ENCODE measurements at regions of chr9 and their contacts with region 1.

Region 1: DNA sequence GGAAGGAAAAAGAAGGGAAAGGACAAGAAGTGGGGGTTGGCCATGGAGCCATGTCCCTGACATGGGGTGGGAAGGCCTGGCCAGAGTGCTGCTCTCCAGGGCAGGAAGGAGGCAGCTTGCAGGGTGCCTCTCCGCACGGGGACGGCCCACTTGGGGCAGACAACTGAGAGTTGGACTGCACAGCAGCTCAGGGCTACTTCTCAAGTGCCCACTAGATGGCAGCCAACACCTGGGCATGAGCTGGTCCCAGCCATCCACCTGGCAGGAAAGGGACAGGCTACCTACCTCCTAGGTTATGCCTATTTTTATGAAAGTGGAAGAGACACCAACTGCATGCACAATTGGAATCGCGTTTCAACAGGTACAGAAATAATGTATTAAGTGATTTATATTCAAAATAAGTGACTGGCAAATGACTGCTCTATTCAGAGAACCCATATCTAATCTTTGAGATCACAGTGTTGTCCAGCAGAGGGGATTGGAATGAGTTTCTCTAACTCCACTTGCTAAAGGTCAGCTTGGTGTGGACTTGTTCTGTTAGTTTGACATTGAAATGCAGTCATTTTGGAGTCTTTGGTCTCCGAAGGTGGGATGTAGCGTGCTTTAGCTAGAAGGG is 113.4 kb downstream of the SYK start:
- DNase-seq: peak; percentile 45 to 85 (median 74)
- ATAC-seq: peak; percentile 90
- H3K4me3 ChIP-seq: no peak overlapping the region
- H3K4me3 Mint-ChIP-seq: no peak overlapping the region
- H3K27ac ChIP-seq: no peak overlapping the region
- H3K27ac Mint-ChIP-seq: no peak overlapping the region
- H3K4me1 ChIP-seq: no peaks in the 10 kb centered on the region
- H3K4me1 Mint-ChIP-seq: no peaks in the 10 kb centered on the region
- H3K27me3 ChIP-seq: no peaks in the 10 kb centered on the region
- H3K27me3 Mint-ChIP-seq: no peaks in the 10 kb centered on the region
- CTCF ChIP-seq: peak; percentile 86

Region 2: GRCh38 chr9:91253488-91253887 is 338.5 kb after region 1 on chr9:
- CTCF ChIA-PET with region 1: no interaction called
- POLR2A ChIA-PET with region 1: no interaction called
- intact Hi-C with region 1: loop called in 1 of 2 experiments (anchors 10 kb)
- DNase-seq: peak in 4 of 9 experiments; percentile 7 to 78 (median 41)
- ATAC-seq: peak; percentile 80
- H3K4me3 ChIP-seq: no peak overlapping the region
- H3K4me3 Mint-ChIP-seq: no peak overlapping the region
- H3K27ac ChIP-seq: no peak overlapping the region
- H3K27ac Mint-ChIP-seq: no peak overlapping the region
- H3K4me1 ChIP-seq: no peaks in the 10 kb centered on the region
- H3K4me1 Mint-ChIP-seq: peaks cover 19% of the 10 kb centered on the region
- H3K27me3 ChIP-seq: no peaks in the 10 kb centered on the region
- H3K27me3 Mint-ChIP-seq: no peaks in the 10 kb centered on the region
- CTCF ChIP-seq: no peak

Region 3: DNA sequence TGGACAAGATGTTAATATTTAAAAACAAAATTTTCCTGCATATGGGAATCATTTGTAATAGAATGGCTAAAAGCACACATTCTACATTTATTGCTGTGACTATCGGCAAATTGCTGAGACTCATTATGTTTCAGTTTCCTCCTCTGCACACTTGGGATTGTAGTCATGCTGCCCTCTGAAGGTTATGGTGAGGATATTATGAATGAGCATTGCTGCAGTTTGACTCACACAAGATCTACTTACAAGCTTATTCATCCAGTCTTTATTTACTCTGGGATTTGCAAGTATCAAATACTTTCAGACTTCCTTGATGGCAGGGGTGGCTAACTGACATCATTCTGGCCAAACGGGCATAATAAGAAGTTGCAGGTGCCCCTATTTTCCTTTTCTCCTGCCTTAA is 518.2 kb after region 1 on chr9:
- CTCF ChIA-PET with region 1: interaction called, 85 read pairs
- POLR2A ChIA-PET with region 1: no interaction called
- intact Hi-C with region 1: no loop called
- DNase-seq: peak in 2 of 9 experiments; percentile 54 to 64
- ATAC-seq: peak; percentile 36
- H3K4me3 ChIP-seq: no peak overlapping the region
- H3K4me3 Mint-ChIP-seq: no peak overlapping the region
- H3K27ac ChIP-seq: no peak overlapping the region
- H3K27ac Mint-ChIP-seq: no peak overlapping the region
- H3K4me1 ChIP-seq: no peaks in the 10 kb centered on the region
- H3K4me1 Mint-ChIP-seq: peaks cover 2% of the 10 kb centered on the region
- H3K27me3 ChIP-seq: no peaks in the 10 kb centered on the region
- H3K27me3 Mint-ChIP-seq: peaks cover 2% of the 10 kb centered on the region
- CTCF ChIP-seq: peak; percentile 25

Region 4: GRCh38 chr9:91681461-91682305 is 766.7 kb after region 1 on chr9:
- CTCF ChIA-PET with region 1: interaction called, 15 read pairs
- POLR2A ChIA-PET with region 1: no interaction called
- intact Hi-C with region 1: loop called (anchors 1 kb)
- DNase-seq: peak; percentile 44 to 74 (median 59)
- ATAC-seq: peak; percentile 80
- H3K4me3 ChIP-seq: no peak overlapping the region
- H3K4me3 Mint-ChIP-seq: peak overlapping the region; percentile 26
- H3K27ac ChIP-seq: no peak overlapping the region
- H3K27ac Mint-ChIP-seq: no peak overlapping the region
- H3K4me1 ChIP-seq: peaks cover 5% of the 10 kb centered on the region
- H3K4me1 Mint-ChIP-seq: peaks cover 1% of the 10 kb centered on the region
- H3K27me3 ChIP-seq: peaks cover 3 to 4% of the 10 kb centered on the region in 2 experiments
- H3K27me3 Mint-ChIP-seq: peaks cover 42% of the 10 kb centered on the region
- CTCF ChIP-seq: peak; percentile 81

Region 5: DNA sequence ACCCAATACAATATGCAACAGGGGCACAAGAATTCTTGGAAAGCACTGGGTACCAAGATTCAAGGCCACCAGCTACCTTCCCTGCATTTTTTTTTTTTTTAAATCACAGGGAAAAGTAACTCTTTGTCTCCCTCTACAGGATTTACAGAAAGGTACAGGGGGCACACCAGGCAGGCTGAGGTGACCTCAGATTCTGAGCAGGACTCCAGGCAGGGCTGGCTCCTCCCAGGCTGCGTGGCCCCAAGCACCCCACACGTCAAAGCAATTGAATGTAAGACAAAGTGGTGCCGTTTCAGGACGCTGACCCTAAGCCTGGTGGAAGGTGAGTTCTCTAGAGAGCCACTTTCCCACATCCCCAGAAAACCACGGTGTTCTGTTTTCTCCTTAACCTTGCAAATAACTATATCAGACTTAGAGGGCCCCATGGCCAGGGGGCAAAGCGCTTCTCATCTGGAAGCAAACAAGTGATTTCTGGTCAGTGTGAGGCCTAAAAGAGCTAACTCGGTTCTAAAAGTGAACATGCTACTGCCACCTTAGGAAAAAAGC is 812.4 kb after region 1 on chr9:
- CTCF ChIA-PET with region 1: interaction called, 29 read pairs
- POLR2A ChIA-PET with region 1: no interaction called
- intact Hi-C with region 1: loop called in 1 of 2 experiments (anchors 1 kb)
- DNase-seq: peak in 3 of 9 experiments; percentile 17 to 57 (median 52)
- ATAC-seq: peak; percentile 55
- H3K4me3 ChIP-seq: no peak overlapping the region
- H3K4me3 Mint-ChIP-seq: no peak overlapping the region
- H3K27ac ChIP-seq: no peak overlapping the region
- H3K27ac Mint-ChIP-seq: no peak overlapping the region
- H3K4me1 ChIP-seq: no peaks in the 10 kb centered on the region
- H3K4me1 Mint-ChIP-seq: no peaks in the 10 kb centered on the region
- H3K27me3 ChIP-seq: no peaks in the 10 kb centered on the region
- H3K27me3 Mint-ChIP-seq: peaks cover 7% of the 10 kb centered on the region
- CTCF ChIP-seq: peak; percentile 55

Region 6: GRCh38 chr9:91734371-91734981 is 819.5 kb after region 1 on chr9:
- CTCF ChIA-PET with region 1: interaction called, 29 read pairs
- POLR2A ChIA-PET with region 1: no interaction called
- intact Hi-C with region 1: loop called in 1 of 2 experiments (anchors 2 kb)
- DNase-seq: peak; percentile 29 to 74 (median 60)
- ATAC-seq: no peak
- H3K4me3 ChIP-seq: no peak overlapping the region
- H3K4me3 Mint-ChIP-seq: no peak overlapping the region
- H3K27ac ChIP-seq: no peak overlapping the region
- H3K27ac Mint-ChIP-seq: no peak overlapping the region
- H3K4me1 ChIP-seq: no peaks in the 10 kb centered on the region
- H3K4me1 Mint-ChIP-seq: no peaks in the 10 kb centered on the region
- H3K27me3 ChIP-seq: no peaks in the 10 kb centered on the region
- H3K27me3 Mint-ChIP-seq: peaks cover 14% of the 10 kb centered on the region
- CTCF ChIP-seq: peak; percentile 98

Region 7: DNA sequence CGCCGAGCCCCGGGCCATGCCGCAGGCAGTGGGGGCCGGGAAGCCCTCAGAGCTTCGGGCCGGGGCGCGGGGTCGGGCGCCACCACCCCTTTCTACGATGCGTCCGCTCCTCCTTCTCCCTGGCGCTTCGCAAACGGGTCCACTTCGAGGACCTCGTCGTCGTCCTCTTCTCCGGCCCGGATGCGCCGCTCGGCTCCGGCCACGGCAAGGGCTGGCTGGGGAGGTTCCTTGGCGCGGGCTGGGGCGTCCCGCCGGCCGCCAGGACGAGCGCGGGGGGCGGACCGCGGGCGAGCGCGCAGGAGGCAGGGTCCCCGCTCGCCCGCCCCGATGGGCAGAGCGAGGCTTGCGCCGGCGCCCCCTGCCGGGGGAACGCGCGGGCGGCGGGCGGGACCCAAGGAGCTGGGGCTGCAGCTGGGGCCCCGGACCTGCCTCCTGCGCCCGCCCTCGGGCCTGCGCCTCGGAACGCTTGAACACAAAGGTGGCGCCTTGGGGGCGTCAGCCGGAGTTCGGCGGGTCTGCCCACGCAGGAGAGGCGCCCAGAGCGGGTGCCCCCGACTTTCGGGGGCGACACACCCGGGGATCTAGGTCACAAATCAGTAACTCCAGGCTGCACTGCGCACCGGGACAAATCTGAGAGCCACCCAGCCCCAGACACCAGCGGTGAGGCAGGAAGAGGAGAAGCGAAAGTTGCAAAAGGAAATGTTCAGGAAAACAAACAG is 1035.1 kb after region 1 on chr9 and contains the start of gene ROR2:
- CTCF ChIA-PET with region 1: no interaction called
- POLR2A ChIA-PET with region 1: no interaction called
- intact Hi-C with region 1: loop called (anchors 5 to 10 kb)
- DNase-seq: peak in 8 of 9 experiments; percentile 6 to 64 (median 36)
- ATAC-seq: peak; percentile 58
- H3K4me3 ChIP-seq: peak within 1 kb of the TSS in 1 of 2 experiments; percentile 26
- H3K4me3 Mint-ChIP-seq: peak within 1 kb of the TSS; percentile 66
- H3K27ac ChIP-seq: no peak within 1 kb of the TSS
- H3K27ac Mint-ChIP-seq: no peak within 1 kb of the TSS
- H3K4me1 ChIP-seq: no peaks in the 10 kb centered on the region
- H3K4me1 Mint-ChIP-seq: peaks cover 8% of the 10 kb centered on the region
- H3K27me3 ChIP-seq: peaks cover 16 to 18% of the 10 kb centered on the region in 2 experiments
- H3K27me3 Mint-ChIP-seq: peaks cover 54% of the 10 kb centered on the region
- CTCF ChIP-seq: no peak
- total RNA-seq, gene ROR2: 0.19 to 0.43 TPM

Measured in CD8-positive, alpha-beta T cell (primary cell).